ENCODE measurements at regions of chr1 and their contacts with region 1.

Region 1: DNA sequence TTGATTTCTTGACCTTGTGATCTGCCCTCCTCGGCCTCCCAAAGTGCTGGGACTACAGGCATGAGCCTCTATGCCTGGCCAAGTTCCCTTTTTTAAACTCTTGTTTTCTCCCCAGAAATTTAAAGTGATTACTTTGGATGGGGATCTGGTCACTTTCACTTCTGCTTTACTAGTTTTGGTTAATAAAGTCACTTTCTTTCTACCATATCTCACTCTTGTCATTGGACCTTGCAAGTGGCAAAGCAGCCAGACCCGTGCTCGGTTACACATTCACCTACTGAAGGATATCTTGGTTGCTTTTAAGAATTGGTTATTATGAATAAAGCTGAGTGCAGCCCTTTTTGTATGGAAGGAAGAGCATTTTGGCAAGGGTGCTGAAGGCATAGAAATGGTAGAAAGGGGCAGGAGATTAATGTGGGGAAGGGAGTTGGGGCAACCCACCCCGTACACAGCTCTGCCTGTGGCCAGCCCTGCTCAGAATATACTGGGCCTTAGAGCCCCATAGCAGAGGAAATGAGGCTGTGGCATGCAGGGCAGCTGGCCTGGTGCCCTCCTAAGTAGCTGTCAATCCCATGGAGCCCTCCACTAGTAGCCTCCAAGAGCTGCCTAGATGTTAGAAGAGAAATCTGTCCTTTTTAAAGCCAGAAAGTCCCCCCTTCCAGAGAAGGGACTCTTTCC is 40.7 kb downstream of the CD2 start:
- DNase-seq: no peak
- H3K4me3 Mint-ChIP-seq: no peak overlapping the region
- H3K27ac Mint-ChIP-seq: peak overlapping the region; percentile 29
- H3K4me1 Mint-ChIP-seq: peaks cover 55% of the 10 kb centered on the region
- H3K27me3 Mint-ChIP-seq: no peaks in the 10 kb centered on the region

Region 2: GRCh38 chr1:116556289-116557006 is 238.5 kb before region 1 on chr1:
- intact Hi-C with region 1: no loop called
- DNase-seq: peak; percentile 88
- H3K4me3 Mint-ChIP-seq: peak overlapping the region; percentile 19
- H3K27ac Mint-ChIP-seq: peak overlapping the region; percentile 86
- H3K4me1 Mint-ChIP-seq: peaks cover 69% of the 10 kb centered on the region
- H3K27me3 Mint-ChIP-seq: no peaks in the 10 kb centered on the region

Region 3: DNA sequence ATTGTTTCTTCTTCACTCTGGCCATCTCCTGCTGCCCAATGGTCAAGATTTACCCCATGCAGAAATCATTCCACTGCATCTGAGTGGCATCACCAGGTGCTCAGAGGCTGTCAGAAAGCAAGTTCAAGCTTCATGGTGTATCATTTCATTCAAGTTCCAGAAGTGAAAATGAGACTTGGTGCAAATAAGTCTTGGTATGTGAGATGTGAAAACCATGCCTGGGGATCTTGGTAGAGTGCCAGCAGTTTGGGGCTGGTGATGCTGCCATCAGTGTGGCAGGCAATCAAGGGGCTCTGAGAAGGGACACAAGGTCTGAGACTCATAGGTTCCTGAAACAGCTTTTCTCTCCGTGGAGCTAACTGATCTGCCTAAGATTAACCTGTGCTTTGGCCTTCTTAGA is 11.3 kb after region 1 on chr1:
- intact Hi-C with region 1: loop called (anchors 1 kb)
- DNase-seq: peak; percentile 83
- H3K4me3 Mint-ChIP-seq: peak overlapping the region; percentile 79
- H3K27ac Mint-ChIP-seq: peak overlapping the region; percentile 95
- H3K4me1 Mint-ChIP-seq: peaks cover 84% of the 10 kb centered on the region
- H3K27me3 Mint-ChIP-seq: no peaks in the 10 kb centered on the region

Measured in activated CD4-positive, alpha-beta T cell treated with anti-CD3 and anti-CD28 coated beads, Interleukin-2, amount 10 ng/mL, durations not matched to agents 24 days and 14 days (primary cell).